ENCODE measurements at regions of chr6 and their contacts with region 1.

Region 1: GRCh38 chr6:159929819-159930218 is 39.0 kb downstream of the MAS1 start:
- DNase-seq: no peak
- H3K4me3 ChIP-seq: no peak overlapping the region
- H3K27ac ChIP-seq: no peak overlapping the region
- H3K27me3 ChIP-seq: no peaks in the 10 kb centered on the region
- CTCF ChIP-seq: no peak

Region 2: DNA sequence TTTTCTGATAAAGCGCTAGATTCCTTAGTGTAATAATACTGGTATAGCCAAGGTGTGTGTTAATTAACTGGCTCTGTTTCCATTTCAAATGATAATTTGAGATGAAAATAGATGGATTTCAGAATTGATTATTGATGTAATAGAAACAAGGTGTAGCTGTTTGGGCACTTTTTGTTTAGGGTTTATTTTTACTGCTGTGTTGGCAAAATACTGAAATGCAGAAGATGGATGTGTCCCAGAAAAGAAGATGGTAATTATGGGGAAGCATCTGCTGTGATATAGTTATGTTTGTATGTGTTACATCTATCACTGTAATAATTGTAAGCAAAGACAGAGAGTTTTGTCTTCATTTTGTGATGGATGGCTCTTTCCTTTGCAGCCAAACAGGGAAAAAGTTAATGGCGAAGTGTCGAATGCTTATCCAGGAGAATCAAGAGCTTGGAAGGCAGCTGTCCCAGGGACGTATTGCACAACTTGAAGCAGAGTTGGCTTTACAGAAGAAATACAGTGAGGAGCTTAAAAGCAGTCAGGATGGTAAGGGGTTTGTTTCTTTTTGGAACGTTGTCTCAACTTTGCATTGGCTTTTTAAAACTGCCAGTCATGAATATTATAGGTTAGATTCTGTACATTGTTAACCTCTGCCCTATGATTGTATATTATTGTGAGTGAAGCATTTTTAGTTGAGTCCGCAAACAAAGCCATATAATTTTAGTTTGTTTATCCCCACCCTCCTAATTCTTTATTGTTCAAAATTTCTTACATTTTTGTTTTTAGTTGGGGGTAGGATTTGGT is 176.5 kb before region 1 on chr6:
- intact Hi-C with region 1: no loop called
- DNase-seq: no peak
- H3K4me3 ChIP-seq: no peak overlapping the region
- H3K27ac ChIP-seq: no peak overlapping the region
- H3K27me3 ChIP-seq: no peaks in the 10 kb centered on the region
- CTCF ChIP-seq: no peak

Region 3: GRCh38 chr6:159875194-159875593 is 54.6 kb before region 1 on chr6:
- intact Hi-C with region 1: loop called in 1 of 2 experiments (anchors 5 kb)
- DNase-seq: no peak
- H3K4me3 ChIP-seq: no peak overlapping the region
- H3K27ac ChIP-seq: peak overlapping the region in 12 of 59 donors; percentile 21 to 78 (median 48)
- H3K27me3 ChIP-seq: no peaks in the 10 kb centered on the region
- CTCF ChIP-seq: no peak